Endothelial cell of umbilical vein (primary cell): ENCODE measurements at regions of chr17 and their contacts with region 1.

Region 1: GRCh38 chr17:77127735-77128361 is 12.9 kb upstream of the SEC14L1 start:
- DNase-seq: no peak
- H3K4me3 ChIP-seq: no peak overlapping the region
- H3K27ac ChIP-seq: peak overlapping the region; percentile 98
- H3K4me1 ChIP-seq: peaks cover 43% of the 10 kb centered on the region
- H3K27me3 ChIP-seq: no peaks in the 10 kb centered on the region
- CTCF ChIP-seq: no peak
- POLR2A ChIP-seq: no peak

Region 2: GRCh38 chr17:77088455-77089123 is 39.3 kb before region 1 on chr17:
- CTCF ChIA-PET with region 1: interaction called, 12 read pairs
- POLR2A ChIA-PET with region 1: interaction called, 8 read pairs
- dilution Hi-C with region 1: no loop called
- intact Hi-C with region 1: loop called (anchors 1 kb)
- DNase-seq: peak; percentile 96
- H3K4me3 ChIP-seq: peak overlapping the region; percentile 68 to 92 (median 73)
- H3K27ac ChIP-seq: peak overlapping the region; percentile 94
- H3K4me1 ChIP-seq: peaks cover 56% of the 10 kb centered on the region
- H3K27me3 ChIP-seq: no peaks in the 10 kb centered on the region
- CTCF ChIP-seq: peak; percentile 78 to 95
- POLR2A ChIP-seq: peak; percentile 80

Region 3: GRCh38 chr17:77109764-77110359 is 18.0 kb before region 1 on chr17:
- CTCF ChIA-PET with region 1: interaction called, 25 read pairs
- POLR2A ChIA-PET with region 1: interaction called, 30 read pairs
- dilution Hi-C with region 1: no loop called
- intact Hi-C with region 1: loop called (anchors 1 kb)
- DNase-seq: peak; percentile 99
- H3K4me3 ChIP-seq: no peak overlapping the region
- H3K27ac ChIP-seq: peak overlapping the region; percentile 99
- H3K4me1 ChIP-seq: peaks cover 43% of the 10 kb centered on the region
- H3K27me3 ChIP-seq: no peaks in the 10 kb centered on the region
- CTCF ChIP-seq: peak in 1 of 2 donors; percentile 23
- POLR2A ChIP-seq: no peak

Region 4: GRCh38 chr17:77140166-77140878 is 12.5 kb after region 1 on chr17:
- CTCF ChIA-PET with region 1: interaction called, 15 read pairs
- POLR2A ChIA-PET with region 1: interaction called, 44 read pairs
- dilution Hi-C with region 1: no loop called
- intact Hi-C with region 1: loop called (anchors 1 kb)
- DNase-seq: peak; percentile 99
- H3K4me3 ChIP-seq: peak overlapping the region in 2 of 3 experiments; percentile 12 to 19
- H3K27ac ChIP-seq: peak overlapping the region; percentile 94
- H3K4me1 ChIP-seq: peaks cover 46% of the 10 kb centered on the region
- H3K27me3 ChIP-seq: no peaks in the 10 kb centered on the region
- CTCF ChIP-seq: peak in 1 of 2 donors; percentile 8
- POLR2A ChIP-seq: peak; percentile 87

Region 5: GRCh38 chr17:77164483-77165091 is 36.7 kb after region 1 on chr17:
- CTCF ChIA-PET with region 1: no interaction called
- POLR2A ChIA-PET with region 1: no interaction called
- dilution Hi-C with region 1: no loop called
- intact Hi-C with region 1: loop called (anchors 1 kb)
- DNase-seq: peak; percentile 93
- H3K4me3 ChIP-seq: peak overlapping the region in 1 of 3 experiments; percentile 25
- H3K27ac ChIP-seq: peak overlapping the region; percentile 88
- H3K4me1 ChIP-seq: peaks cover 71% of the 10 kb centered on the region
- H3K27me3 ChIP-seq: no peaks in the 10 kb centered on the region
- CTCF ChIP-seq: no peak
- POLR2A ChIP-seq: no peak

Region 6: GRCh38 chr17:77208217-77208808 is 80.5 kb after region 1 on chr17:
- CTCF ChIA-PET with region 1: interaction called, 3 read pairs
- POLR2A ChIA-PET with region 1: no interaction called
- dilution Hi-C with region 1: no loop called
- intact Hi-C with region 1: loop called (anchors 1 kb)
- DNase-seq: peak; percentile 78
- H3K4me3 ChIP-seq: no peak overlapping the region
- H3K27ac ChIP-seq: peak overlapping the region; percentile 91
- H3K4me1 ChIP-seq: peaks cover 58% of the 10 kb centered on the region
- H3K27me3 ChIP-seq: no peaks in the 10 kb centered on the region
- CTCF ChIP-seq: peak in 1 of 2 donors; percentile 49
- POLR2A ChIP-seq: peak; percentile 42